ENCODE measurements at regions of chr2 and their contacts with region 1.

Region 1: GRCh38 chr2:119407430-119408220 is 24.0 kb upstream of the TMEM37 start:
- DNase-seq: no peak
- ATAC-seq: peak; percentile 66

Region 2: DNA sequence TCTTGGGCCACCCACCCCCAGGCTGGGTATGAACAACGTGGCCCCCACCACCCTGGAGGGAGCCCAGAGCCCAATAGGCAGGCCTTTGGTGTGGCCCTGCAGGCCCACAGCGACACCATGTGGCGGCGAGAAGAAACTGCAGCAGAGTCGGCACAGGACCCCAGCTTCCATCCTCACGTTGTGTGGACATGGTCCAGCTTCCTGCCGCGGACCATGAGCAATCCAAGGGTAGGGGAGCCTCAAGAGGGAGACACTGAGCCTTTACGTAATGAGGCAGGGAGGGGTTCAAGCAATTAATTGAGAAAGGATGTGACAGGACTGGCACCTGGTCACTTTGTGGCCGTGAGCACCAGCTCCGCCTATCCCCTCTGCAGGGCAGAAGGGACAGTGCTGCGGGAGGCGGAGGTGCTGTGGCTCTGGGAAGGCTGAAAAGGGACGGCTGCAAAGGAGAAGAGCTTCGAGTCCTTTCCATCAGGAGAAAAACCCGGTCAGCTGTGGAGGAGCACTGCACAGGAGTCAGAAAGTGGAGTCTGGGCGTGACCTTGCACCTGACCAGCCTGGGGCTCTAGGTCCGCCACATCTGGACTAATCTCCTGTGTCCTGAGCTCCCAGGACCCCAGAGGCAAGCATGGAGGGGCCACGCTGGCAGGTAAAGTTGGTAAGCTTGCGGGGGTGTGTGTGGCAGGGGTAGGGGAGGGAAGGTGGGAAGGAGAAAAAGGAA is 68.8 kb after region 1 on chr2:
- intact Hi-C with region 1: loop called (anchors 2 to 10 kb)
- DNase-seq: peak in 1 of 2 donors; percentile 39
- ATAC-seq: peak; percentile 82

Region 3: GRCh38 chr2:119659601-119660342 is 252.1 kb after region 1 on chr2:
- intact Hi-C with region 1: loop called in 1 of 2 experiments (anchors 10 kb)
- DNase-seq: no peak
- ATAC-seq: peak; percentile 53

Measured in left colon (tissue), 2 donors.